KBM-7 (cell line): ENCODE measurements at regions of chr5 and their contacts with region 1.

Region 1: DNA sequence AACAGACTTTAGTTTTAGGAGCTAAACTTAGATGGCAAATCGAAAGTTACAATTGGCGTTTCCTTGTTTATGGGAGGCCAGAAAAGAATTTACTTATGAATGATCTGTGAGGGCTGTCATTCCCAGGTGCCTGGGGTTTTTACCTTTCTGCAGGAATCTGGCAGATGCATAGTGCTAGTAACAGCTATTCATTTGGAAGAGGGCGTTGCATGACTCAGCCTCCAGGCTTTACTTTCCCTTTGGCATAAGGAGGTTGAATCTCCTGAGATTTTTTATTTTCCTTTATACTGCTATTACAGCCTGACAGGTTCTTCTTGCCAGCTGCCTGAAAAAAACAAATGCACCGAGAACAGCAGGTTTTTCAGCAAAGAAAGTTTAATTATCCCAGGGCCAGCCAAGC is 30.0 kb downstream of the CARD6 start:
- DNase-seq: no peak

Region 2: GRCh38 chr5:40540301-40540700 is 330.9 kb before region 1 on chr5:
- in situ Hi-C with region 1: no loop called
- DNase-seq: no peak

Region 3: DNA sequence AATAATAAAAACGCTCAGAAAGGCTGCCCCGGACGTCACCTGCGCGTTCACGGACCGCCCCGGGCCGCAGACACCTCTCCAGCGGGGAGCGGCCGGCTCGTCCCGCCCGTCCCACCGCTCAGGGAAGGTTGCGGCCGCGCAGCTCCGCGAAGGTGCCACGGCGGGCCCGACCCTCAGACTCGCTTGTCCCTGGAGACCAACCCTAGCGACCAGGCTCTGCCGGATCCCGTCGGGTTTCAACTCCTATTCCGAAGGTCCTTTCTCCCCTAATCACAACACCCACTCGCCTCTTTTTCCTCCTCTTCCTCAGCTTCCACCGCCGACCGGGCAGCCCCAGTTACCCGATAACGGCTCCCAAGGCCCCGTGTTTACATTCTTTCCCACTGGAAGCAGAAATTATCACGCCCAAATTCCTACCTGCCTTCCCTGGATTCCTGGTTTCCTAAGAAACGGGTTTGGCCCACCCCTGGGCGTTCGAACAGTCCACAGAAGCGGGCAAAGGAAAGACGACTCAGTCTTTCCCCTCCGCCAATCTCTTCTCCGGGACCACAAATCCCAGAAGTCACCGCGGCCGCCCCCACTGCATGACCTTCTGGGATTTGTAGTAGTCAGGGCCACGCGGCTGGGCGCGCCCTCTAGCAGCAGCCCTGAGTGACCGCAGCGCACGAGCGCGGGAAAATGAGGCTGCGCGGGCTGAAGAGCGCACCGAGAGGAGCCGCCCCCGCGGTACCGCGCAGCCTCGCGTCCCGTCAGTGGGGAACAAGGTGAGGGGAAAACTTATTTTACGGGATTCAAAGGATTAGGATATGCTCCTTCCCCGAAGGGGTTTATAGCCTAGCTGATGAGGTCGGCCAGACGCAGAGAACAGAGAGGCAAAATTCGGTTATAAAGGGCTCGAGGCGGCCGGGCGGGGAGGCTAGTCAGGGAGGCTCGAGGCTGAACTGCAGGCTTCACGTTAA is 115.5 kb before region 1 on chr5 and contains the start of gene TTC33:
- in situ Hi-C with region 1: loop called (anchors 25 kb)
- DNase-seq: peak; percentile 96